ENCODE measurements at regions of chr4 and their contacts with region 1.

Region 1: DNA sequence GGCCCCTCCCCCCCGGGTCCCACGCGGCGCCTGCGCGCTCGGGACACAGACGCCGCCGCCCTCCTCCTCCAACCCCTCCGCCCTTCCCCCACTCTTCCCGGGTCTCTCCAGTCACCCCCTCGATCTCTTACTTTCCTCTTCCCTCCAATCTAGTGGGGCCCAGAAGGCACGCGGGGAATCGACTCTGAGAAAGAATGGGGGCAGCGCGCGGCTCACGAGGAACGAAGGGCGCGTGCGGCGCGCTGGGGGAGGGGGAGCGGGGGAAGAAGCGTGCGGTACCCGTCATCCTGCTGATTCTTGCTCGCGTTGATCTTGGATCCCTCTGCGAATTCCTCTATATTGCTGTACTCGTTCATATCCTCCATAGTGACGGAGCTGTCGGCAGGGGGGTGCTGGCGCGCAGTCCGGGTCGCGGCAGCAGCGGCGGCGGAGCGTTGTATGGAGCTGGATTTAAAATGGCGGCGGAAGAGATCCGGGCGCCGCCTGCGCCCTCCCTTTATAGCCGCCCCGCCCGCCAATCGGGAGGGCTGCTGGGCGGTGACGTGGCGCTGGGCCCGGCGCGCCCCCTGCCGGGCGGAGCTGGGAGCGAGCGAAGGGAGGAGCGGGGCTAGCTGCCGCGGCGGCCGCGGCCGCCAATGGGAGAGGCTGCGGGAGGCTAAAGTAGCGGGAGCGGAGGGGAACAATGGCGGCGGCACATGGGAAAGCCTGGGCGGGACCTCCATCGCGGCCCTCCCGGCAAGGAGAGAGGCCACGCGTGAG is 1.1 kb downstream of the HNRNPDL start:
- DNase-seq: peak; percentile 95
- ATAC-seq: peak; percentile 90

Region 2: GRCh38 chr4:82284858-82285805 is 144.0 kb before region 1 on chr4:
- intact Hi-C with region 1: loop called (anchors 2 kb)
- DNase-seq: peak; percentile 99
- ATAC-seq: peak; percentile 100

Region 3: DNA sequence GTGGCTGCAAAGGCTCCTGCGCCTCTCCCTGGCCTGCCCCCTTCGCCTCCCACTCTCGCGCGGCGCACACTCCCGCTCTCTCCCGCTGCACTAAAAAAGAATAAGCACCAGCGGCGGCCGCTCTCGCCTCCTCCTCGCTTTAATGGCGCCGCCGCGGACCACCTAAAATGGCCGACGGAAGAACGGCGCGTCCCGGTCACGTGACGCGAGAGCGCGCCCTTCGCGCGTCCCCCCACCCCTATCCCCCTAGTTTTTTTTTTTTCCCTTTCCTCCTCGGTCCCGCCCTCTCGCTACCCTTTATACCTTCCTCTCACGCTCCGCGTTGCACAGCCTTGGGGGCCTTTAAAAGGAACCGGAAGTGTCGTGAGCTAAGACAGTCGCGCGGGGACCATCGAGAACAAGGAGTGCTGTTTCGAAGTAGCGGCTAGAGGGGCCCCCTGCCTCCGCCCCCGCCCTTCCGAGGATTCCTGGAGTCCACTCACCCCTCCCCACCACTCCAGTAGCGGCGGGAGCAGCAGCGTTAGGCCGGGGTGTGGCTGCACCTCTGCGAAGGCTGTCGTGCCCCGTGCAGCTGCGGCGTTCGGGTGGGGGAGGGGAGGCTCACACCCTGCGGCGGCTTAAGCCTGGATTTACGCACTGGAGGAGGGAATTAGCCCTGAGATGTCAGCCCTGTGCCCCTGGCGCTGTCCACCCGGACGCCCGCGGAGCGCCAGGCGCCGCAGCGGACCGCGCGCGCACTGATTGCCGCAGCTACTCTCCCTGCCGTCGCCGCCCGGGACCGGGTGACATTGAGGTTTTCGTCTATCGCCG is 55.1 kb before region 1 on chr4 and contains the start of gene HNRNPD:
- intact Hi-C with region 1: loop called (anchors 1 kb)
- DNase-seq: peak; percentile 98
- ATAC-seq: peak; percentile 98
- total RNA-seq, gene HNRNPD: 111 TPM

Region 4: DNA sequence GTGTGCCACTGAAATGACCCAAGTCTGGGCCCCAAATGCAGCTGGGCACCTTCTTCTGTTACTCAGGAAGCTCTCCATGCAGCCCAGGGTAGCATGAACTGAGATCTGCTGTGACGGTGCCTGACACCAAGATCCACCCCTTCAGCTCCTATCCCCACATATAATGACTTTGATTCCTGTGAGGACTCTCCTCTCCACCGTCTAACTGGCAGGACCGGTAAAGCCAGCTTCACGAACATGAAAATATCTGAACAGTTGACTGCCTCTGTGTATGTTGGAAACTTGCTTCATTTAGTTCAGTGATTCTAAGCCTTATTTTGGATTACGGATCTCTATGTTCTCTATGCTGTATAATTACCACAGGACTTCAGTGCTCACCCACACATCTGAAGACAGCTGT is 248.2 kb after region 1 on chr4:
- intact Hi-C with region 1: no loop called
- DNase-seq: no peak
- ATAC-seq: no peak

Region 5: DNA sequence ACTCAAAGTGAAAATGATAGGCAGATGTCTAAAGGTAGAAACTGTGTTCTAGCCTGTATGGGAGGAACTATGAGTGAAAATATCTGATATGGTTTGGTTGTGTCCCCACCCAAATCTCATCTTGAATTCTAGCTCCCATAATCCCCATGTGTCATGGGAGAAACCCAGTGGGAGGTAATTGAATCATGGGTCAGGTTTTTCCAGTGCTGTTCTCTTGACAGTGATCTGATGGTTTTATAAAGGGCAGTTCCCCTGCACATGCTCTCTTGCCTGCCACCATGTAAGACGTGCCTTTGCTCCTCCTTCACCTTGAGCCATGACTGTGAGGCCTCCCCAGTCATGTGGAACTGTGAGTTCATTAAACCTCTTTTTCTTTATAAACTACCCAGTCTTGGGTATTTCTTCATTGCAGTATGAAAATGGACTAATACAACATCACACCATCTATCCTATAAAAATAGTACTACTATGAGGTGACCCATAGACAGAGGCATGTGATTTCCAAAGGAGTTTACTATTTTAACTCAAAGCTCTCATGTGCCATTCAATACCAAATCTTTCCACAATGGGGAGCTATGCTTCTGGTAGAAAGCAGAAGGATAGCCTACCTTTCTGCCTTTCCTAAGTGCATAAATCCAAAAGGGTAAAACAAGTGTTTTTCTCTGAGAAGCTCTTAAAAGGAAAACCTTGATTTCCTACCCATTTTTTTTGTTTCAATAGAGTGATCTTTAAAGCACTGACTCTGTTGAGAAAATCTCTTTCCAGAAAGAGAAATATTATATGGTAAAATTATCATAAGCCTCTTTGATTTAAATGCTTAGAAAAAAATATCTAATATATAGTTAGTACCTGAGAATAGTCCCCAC is 423.0 kb after region 1 on chr4:
- intact Hi-C with region 1: no loop called
- DNase-seq: no peak
- ATAC-seq: no peak

Region 6: GRCh38 chr4:82900331-82901128 is 471.4 kb after region 1 on chr4 and contains the start of gene THAP9:
- intact Hi-C with region 1: loop called (anchors 1 kb)
- DNase-seq: peak; percentile 99
- ATAC-seq: peak; percentile 98
- total RNA-seq, gene THAP9: 5.5 TPM